AG04450 (cell line): ENCODE measurements at regions of chr10 and their contacts with region 1.

Region 1: GRCh38 chr10:101176577-101176976 is 45.5 kb downstream of the TLX1 start:
- DNase-seq: no peak
- H3K4me3 ChIP-seq: no peak overlapping the region
- H3K27ac ChIP-seq: no peak overlapping the region
- H3K27me3 ChIP-seq: peaks cover 18% of the 10 kb centered on the region
- CTCF ChIP-seq: no peak

Region 2: GRCh38 chr10:101535949-101536348 is 359.4 kb after region 1 on chr10:
- CTCF ChIA-PET with region 1: interaction called, 12 read pairs
- POLR2A ChIA-PET with region 1: no interaction called
- DNase-seq: no peak
- H3K4me3 ChIP-seq: no peak overlapping the region
- H3K27ac ChIP-seq: no peak overlapping the region
- H3K27me3 ChIP-seq: no peaks in the 10 kb centered on the region
- CTCF ChIP-seq: no peak

Region 3: GRCh38 chr10:101759309-101760247 is 583.0 kb after region 1 on chr10:
- CTCF ChIA-PET with region 1: no interaction called
- POLR2A ChIA-PET with region 1: no interaction called
- DNase-seq: no peak
- H3K4me3 ChIP-seq: no peak overlapping the region
- H3K27ac ChIP-seq: no peak overlapping the region
- H3K27me3 ChIP-seq: peaks cover 68% of the 10 kb centered on the region
- CTCF ChIP-seq: no peak